ENCODE measurements at regions of chr13 and their contacts with region 1.

Region 1: GRCh38 chr13:48493851-48494250 is 39.0 kb downstream of the RCBTB2 start:
- DNase-seq: peak; percentile 47
- H3K4me3 ChIP-seq: no peak overlapping the region
- H3K27ac ChIP-seq: peak overlapping the region; percentile 12
- H3K4me1 ChIP-seq: peaks cover 50% of the 10 kb centered on the region
- H3K27me3 ChIP-seq: no peaks in the 10 kb centered on the region
- CTCF ChIP-seq: no peak
- POLR2A ChIP-seq: no peak

Region 2: GRCh38 chr13:47945737-47946136 is 548.1 kb before region 1 on chr13:
- CTCF ChIA-PET with region 1: no interaction called
- POLR2A ChIA-PET with region 1: no interaction called
- dilution Hi-C with region 1: no loop called
- intact Hi-C with region 1: no loop called
- DNase-seq: no peak
- H3K4me3 ChIP-seq: no peak overlapping the region
- H3K27ac ChIP-seq: no peak overlapping the region
- H3K4me1 ChIP-seq: no peaks in the 10 kb centered on the region
- H3K27me3 ChIP-seq: no peaks in the 10 kb centered on the region
- CTCF ChIP-seq: no peak
- POLR2A ChIP-seq: no peak

Region 3: GRCh38 chr13:48448959-48449614 is 44.8 kb before region 1 on chr13:
- CTCF ChIA-PET with region 1: no interaction called
- POLR2A ChIA-PET with region 1: no interaction called
- dilution Hi-C with region 1: no loop called
- intact Hi-C with region 1: loop called (anchors 1 kb)
- DNase-seq: no peak
- H3K4me3 ChIP-seq: peak overlapping the region in 1 of 3 experiments; percentile 23
- H3K27ac ChIP-seq: peak overlapping the region; percentile 3
- H3K4me1 ChIP-seq: peaks cover 41% of the 10 kb centered on the region
- H3K27me3 ChIP-seq: no peaks in the 10 kb centered on the region
- CTCF ChIP-seq: no peak
- POLR2A ChIP-seq: no peak

Region 4: DNA sequence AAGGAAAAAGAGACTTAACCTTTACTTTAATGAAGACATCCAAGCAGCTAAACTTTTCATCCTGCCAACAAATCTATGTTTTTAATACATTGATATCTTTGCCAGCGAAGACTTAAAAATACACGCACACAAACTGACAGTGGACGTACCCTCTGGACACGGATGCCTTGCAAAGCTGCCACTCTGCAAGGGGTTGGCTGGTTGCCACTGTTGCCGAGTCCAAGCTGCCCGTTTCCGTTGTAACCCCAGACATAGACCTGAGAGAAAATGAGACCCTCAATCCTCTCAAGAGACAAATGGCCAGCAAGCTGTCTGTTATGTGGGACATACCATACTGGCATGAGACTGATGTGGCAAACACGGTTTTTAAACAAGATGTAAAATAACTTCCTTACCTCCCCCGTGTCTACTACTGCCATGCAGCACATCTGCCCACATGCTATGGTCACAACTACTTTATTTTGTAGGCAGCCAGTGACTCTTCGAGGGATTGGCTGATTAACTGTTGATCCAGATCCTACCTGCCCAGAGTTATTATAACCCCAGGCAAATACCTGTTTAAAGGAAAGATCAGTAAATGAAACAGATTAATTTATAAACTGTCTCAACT is 17.9 kb after region 1 on chr13:
- CTCF ChIA-PET with region 1: interaction called, 3 read pairs
- POLR2A ChIA-PET with region 1: no interaction called
- dilution Hi-C with region 1: no loop called
- intact Hi-C with region 1: loop called (anchors 2 kb)
- DNase-seq: peak; percentile 44
- H3K4me3 ChIP-seq: no peak overlapping the region
- H3K27ac ChIP-seq: no peak overlapping the region
- H3K4me1 ChIP-seq: peaks cover 7% of the 10 kb centered on the region
- H3K27me3 ChIP-seq: no peaks in the 10 kb centered on the region
- CTCF ChIP-seq: no peak
- POLR2A ChIP-seq: no peak

Region 5: DNA sequence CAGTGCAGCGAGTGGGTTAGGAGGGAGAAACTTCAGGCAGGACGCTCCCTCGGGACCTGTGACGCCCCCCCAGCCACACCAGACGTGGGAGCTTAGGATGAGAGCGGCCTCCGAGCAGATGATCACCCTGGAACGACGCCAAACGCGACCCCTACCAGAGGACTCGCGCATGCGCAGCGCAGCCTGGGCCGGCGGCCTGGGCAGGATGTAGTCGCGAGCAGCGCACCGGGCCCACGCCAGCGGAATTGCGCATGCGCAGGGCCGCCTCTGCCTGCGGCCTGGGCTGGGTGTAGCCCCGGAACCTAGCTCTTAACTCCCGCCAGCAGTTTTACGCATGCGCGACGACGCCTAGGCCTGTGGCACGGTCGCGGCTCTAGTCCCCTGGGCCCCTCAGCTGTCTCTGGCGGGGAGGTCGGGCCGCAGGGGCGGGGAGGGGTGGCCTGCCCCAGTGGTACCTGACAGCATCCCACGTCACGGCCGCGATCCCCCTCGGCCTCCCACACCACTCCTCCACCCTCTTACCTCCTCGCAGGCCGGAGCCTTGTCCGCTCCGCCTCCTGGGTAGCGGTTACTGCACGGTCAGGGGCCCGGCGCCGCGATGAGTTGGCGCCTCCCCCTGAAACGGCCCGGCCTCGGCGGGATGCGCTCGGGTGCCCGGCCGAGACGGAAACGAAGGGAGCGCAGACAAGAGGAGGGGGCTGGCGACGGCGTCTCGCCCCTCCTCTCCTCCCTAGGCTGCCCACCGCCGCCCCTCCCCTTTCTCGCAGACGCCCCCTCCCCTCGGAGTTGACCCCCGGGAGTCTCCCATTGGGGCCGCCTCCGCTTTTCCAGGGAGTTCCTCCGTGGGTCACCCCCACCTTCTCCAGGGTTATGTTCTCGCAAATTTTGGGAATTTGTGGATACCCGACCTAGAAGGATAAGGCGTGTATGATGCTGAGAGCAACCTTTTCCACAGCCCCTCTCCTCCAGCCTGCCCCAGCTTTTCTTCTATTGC is 39.0 kb after region 1 on chr13 and contains the start of gene RCBTB2:
- CTCF ChIA-PET with region 1: interaction called, 4 read pairs
- POLR2A ChIA-PET with region 1: interaction called, 5 read pairs
- dilution Hi-C with region 1: no loop called
- intact Hi-C with region 1: loop called (anchors 1 kb)
- DNase-seq: peak; percentile 99
- H3K4me3 ChIP-seq: peak within 1 kb of the TSS; percentile 74 to 90 (median 78)
- H3K27ac ChIP-seq: peak within 1 kb of the TSS; percentile 73
- H3K4me1 ChIP-seq: peaks cover 10% of the 10 kb centered on the region
- H3K27me3 ChIP-seq: no peaks in the 10 kb centered on the region
- CTCF ChIP-seq: no peak
- POLR2A ChIP-seq: peak; percentile 95
- total RNA-seq, gene RCBTB2: 9.9 and 12.6 TPM in 2 replicates

Region 6: DNA sequence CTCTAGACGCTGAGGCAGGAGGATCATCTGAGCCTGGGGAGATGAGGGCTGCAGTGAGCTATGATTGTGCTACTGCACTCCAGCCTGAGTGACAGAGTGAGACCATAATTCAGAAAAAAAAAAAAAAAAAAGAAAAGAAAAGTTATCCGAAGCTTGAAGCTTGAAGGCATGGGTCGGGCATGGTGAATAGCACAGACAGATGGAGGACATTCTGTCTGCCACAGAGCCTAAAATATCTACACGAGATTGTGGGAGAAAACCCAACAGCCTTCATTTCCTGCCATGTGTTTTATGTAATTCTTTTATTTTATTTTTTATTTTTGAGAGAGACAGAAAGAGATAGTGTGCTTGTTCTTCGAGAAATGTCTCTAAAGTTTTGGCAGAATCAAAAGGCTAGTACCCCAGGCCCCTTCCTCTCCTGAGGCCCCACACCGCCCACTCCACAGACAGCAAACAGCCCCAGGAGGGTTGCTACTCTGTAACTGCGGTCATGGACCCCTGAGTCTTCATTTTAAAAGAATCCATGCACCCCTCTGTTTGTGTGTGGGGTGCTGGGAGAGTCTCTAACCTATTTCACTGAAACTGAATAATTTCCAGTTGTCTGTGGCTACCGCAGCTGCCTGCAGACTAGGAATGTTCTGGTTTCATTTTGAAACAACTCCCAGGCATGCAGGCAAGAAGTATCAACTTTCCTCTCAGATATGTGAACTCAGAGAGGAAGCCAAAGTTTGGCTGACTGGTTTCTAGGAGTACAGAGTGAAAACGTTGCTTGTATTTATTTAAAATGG is 77.5 kb after region 1 on chr13:
- CTCF ChIA-PET with region 1: no interaction called
- POLR2A ChIA-PET with region 1: no interaction called
- dilution Hi-C with region 1: no loop called
- intact Hi-C with region 1: loop called (anchors 2 kb)
- DNase-seq: peak; percentile 45
- H3K4me3 ChIP-seq: no peak overlapping the region
- H3K27ac ChIP-seq: no peak overlapping the region
- H3K4me1 ChIP-seq: peaks cover 9% of the 10 kb centered on the region
- H3K27me3 ChIP-seq: no peaks in the 10 kb centered on the region
- CTCF ChIP-seq: no peak
- POLR2A ChIP-seq: no peak

Measured in endothelial cell of umbilical vein (primary cell).